GM12878 (cell line): ENCODE measurements at regions of chr17 and their contacts with region 1.

Region 1: GRCh38 chr17:72077326-72077960 is 43.4 kb upstream of the SOX9 start:
- DNase-seq: no peak
- ATAC-seq: no peak
- H3K4me3 ChIP-seq: no peak overlapping the region
- H3K27ac ChIP-seq: no peak overlapping the region
- H3K4me1 ChIP-seq: no peaks in the 10 kb centered on the region
- H3K27me3 ChIP-seq: no peaks in the 10 kb centered on the region
- CTCF ChIP-seq: no peak
- EP300 ChIP-seq: no peak
- POLR2A ChIP-seq: no peak
- RAD21 ChIP-seq: no peak

Region 2: DNA sequence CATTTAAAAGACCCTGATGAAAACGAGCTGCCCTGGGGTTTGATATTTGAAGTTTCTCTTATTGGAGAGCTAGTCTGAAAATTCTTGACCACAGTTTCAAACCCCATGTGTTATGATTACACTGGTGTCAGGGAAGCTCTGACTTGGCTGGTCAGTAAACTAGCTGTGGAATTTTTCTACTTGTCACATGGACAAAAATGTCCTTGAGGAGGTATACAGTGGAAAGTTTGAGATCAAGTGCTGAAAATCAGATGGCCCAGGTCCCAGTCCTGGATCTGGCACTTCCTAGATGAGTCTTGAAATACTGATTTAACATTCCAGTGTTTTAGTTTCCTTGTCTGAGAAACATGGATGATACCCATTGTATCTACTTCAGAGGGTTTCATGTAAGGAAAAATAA is 12.7 kb after region 1 on chr17:
- CTCF ChIA-PET with region 1: interaction called, 10 read pairs
- POLR2A ChIA-PET with region 1: no interaction called
- RAD21 ChIA-PET with region 1: no interaction called
- SMC1A ChIA-PET with region 1: interaction called, 7 read pairs
- in situ Hi-C with region 1: no loop called
- intact Hi-C with region 1: no loop called
- DNase-seq: no peak
- ATAC-seq: no peak
- H3K4me3 ChIP-seq: no peak overlapping the region
- H3K27ac ChIP-seq: no peak overlapping the region
- H3K4me1 ChIP-seq: no peaks in the 10 kb centered on the region
- H3K27me3 ChIP-seq: no peaks in the 10 kb centered on the region
- CTCF ChIP-seq: no peak
- EP300 ChIP-seq: no peak
- POLR2A ChIP-seq: no peak
- RAD21 ChIP-seq: no peak